ENCODE measurements at regions of chrX and their contacts with region 1.

Region 1: GRCh38 chrX:136953867-136954787 is 73.6 kb upstream of the RBMX start:
- DNase-seq: peak; percentile 12 to 70 (median 46)
- ATAC-seq: peak; percentile 49
- H3K4me3 ChIP-seq: no peak overlapping the region
- H3K4me3 Mint-ChIP-seq: no peak overlapping the region
- H3K27ac ChIP-seq: no peak overlapping the region
- H3K27ac Mint-ChIP-seq: no peak overlapping the region
- H3K4me1 ChIP-seq: no peaks in the 10 kb centered on the region
- H3K4me1 Mint-ChIP-seq: no peaks in the 10 kb centered on the region
- H3K27me3 ChIP-seq: no peaks in the 10 kb centered on the region
- H3K27me3 Mint-ChIP-seq: no peaks in the 10 kb centered on the region
- CTCF ChIP-seq: peak; percentile 51

Region 2: GRCh38 chrX:137194164-137194563 is 240.0 kb after region 1 on chrX:
- CTCF ChIA-PET with region 1: no interaction called
- POLR2A ChIA-PET with region 1: no interaction called
- intact Hi-C with region 1: loop called (anchors 10 kb)
- DNase-seq: peak in 2 of 9 experiments; percentile 22 to 32
- ATAC-seq: no peak
- H3K4me3 ChIP-seq: no peak overlapping the region
- H3K4me3 Mint-ChIP-seq: no peak overlapping the region
- H3K27ac ChIP-seq: no peak overlapping the region
- H3K27ac Mint-ChIP-seq: no peak overlapping the region
- H3K4me1 ChIP-seq: no peaks in the 10 kb centered on the region
- H3K4me1 Mint-ChIP-seq: peaks cover 13% of the 10 kb centered on the region
- H3K27me3 ChIP-seq: no peaks in the 10 kb centered on the region
- H3K27me3 Mint-ChIP-seq: no peaks in the 10 kb centered on the region
- CTCF ChIP-seq: no peak

Region 3: DNA sequence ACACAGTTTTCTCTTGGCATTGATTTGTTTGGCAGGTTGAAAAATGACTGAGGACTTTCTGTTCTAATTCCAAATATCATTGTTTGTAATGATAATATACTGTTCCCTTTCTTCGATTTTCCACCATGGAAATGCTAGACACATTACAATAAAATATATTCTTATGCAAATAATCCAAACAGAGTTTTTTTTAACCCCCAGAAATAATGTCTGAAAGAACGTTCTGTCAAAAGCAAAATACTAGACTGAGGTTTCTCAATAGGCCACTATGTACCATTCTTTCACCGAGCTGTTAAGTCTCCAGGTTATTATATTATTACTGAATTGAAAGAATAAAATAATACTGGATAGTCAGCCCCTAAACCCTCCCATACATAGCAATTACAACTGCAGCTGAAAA is 924.3 kb after region 1 on chrX:
- CTCF ChIA-PET with region 1: no interaction called
- POLR2A ChIA-PET with region 1: no interaction called
- intact Hi-C with region 1: no loop called
- DNase-seq: no peak
- ATAC-seq: no peak
- H3K4me3 ChIP-seq: no peak overlapping the region
- H3K4me3 Mint-ChIP-seq: no peak overlapping the region
- H3K27ac ChIP-seq: no peak overlapping the region
- H3K27ac Mint-ChIP-seq: no peak overlapping the region
- H3K4me1 ChIP-seq: no peaks in the 10 kb centered on the region
- H3K4me1 Mint-ChIP-seq: no peaks in the 10 kb centered on the region
- H3K27me3 ChIP-seq: no peaks in the 10 kb centered on the region
- H3K27me3 Mint-ChIP-seq: no peaks in the 10 kb centered on the region
- CTCF ChIP-seq: no peak

Region 4: DNA sequence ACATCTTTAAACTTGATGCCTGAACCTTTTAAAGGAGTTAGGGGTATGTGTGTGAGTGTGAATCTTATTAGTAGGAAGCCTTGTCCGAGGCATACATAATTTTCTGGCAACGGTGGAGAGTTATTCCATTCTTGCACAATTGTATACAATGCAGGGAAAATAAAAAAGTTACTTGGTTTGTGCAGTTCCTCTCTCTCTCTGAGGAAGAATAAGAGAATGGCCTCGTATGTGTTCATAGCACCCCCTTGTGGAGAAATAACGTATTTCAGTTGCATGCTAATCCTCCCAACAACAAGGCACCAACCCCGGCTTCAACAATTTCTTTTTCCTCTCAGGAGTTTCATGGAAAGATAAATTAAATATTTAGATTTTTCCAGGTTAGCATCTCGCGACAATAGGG is 1791.1 kb after region 1 on chrX:
- CTCF ChIA-PET with region 1: no interaction called
- POLR2A ChIA-PET with region 1: no interaction called
- intact Hi-C with region 1: loop called in 1 of 2 experiments (anchors 10 kb)
- DNase-seq: peak in 3 of 9 experiments; percentile 6 to 23 (median 19)
- ATAC-seq: no peak
- H3K4me3 ChIP-seq: no peak overlapping the region
- H3K4me3 Mint-ChIP-seq: no peak overlapping the region
- H3K27ac ChIP-seq: no peak overlapping the region
- H3K27ac Mint-ChIP-seq: no peak overlapping the region
- H3K4me1 ChIP-seq: no peaks in the 10 kb centered on the region
- H3K4me1 Mint-ChIP-seq: no peaks in the 10 kb centered on the region
- H3K27me3 ChIP-seq: no peaks in the 10 kb centered on the region
- H3K27me3 Mint-ChIP-seq: no peaks in the 10 kb centered on the region
- CTCF ChIP-seq: no peak